ENCODE measurements at regions of chr6 and their contacts with region 1.

Region 1: GRCh38 chr6:83417880-83418663 is 12.8 kb downstream of the ME1 start:
- DNase-seq: no peak

Region 2: GRCh38 chr6:83221889-83222479 is 196.1 kb before region 1 on chr6:
- intact Hi-C with region 1: loop called (anchors 10 kb)
- DNase-seq: no peak

Region 3: DNA sequence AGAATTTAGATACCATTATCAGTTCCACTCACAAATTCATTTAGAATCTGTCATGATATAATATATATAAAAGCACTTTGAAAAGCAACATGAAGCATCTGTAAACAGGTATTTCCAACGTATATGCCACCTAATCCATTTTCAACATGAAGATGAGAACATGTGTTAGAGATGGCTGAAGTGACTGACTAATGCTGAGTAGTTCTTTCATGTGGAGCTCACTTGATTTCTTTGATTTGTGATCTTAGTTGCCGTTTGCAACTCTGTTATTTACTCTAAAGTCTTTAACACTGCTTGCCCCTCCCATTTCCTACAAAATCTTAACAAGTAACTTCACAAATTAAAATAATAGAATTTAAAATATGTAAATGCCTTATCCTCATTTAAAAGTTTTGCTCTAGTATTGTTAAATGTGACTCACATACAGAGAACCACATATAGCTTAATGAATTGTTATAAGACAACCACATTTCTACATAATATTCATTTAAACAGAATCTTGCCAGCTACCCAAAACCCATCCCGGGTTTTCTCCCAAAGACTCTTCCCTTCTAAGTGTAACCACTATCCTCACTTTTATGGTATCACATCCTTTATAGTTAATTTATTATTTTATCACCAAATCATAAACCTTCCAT is 65.5 kb before region 1 on chr6:
- intact Hi-C with region 1: no loop called
- DNase-seq: no peak

Region 4: GRCh38 chr6:83365931-83366330 is 52.1 kb before region 1 on chr6:
- intact Hi-C with region 1: no loop called
- DNase-seq: no peak

Region 5: GRCh38 chr6:83514866-83515466 is 96.9 kb after region 1 on chr6:
- intact Hi-C with region 1: loop called (anchors 2 kb)
- DNase-seq: no peak

Region 6: DNA sequence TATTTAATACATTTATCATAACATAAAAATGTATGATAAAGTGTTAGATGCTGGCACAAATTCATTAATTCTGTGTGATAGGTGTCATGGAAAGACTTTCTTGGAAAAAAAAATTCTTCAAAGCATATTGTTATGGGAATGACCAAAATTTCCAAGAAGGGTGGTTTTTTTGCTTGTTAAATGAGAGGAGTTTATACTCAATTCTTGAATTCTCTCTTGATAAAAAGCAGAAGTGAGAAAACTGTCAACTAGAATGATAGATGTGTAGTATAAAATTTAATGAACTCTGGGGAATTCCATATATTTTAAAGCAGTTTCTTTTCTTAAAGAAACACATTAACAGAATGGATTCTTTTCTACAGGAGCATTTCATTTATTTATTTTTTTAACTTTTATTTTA is 352.8 kb after region 1 on chr6:
- intact Hi-C with region 1: no loop called
- DNase-seq: no peak